Activated CD4-positive, alpha-beta T cell treated with anti-CD3 and anti-CD28 coated beads for 36 hours (primary cell): ENCODE measurements at regions of chr2 and their contacts with region 1.

Region 1: DNA sequence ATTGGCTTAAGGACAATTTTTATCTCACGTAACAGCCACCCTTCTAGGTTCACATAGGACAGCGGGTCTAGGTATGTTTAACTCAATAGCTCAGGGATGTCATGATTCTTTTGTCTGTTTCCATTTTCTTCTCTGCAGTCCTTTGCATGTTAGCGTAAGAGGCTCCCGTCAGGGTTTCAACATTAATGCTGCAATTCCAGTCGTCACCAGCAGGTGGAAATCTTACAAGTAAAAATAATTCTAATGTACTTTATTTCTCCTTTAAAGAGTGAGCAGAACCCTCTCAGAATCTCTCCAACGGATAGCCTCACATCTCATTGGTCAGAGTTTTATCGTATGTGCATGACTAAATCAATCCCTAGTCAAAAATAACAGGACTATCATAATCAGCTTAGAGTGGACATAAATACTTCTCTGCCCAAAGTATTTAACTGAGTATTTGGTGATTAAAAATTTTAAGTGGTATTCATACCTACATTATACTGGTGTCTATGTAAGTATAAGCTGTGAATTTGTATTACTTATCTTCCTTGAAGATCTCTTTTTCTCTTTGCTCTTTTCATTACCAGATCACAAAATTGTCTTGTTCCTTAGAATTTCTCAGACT is 487.2 kb upstream of the GCFC2 start:
- DNase-seq: peak; percentile 68
- ATAC-seq: no peak
- H3K4me3 Mint-ChIP-seq: no peak overlapping the region
- H3K27ac Mint-ChIP-seq: no peak overlapping the region
- H3K4me1 Mint-ChIP-seq: no peaks in the 10 kb centered on the region
- H3K27me3 Mint-ChIP-seq: no peaks in the 10 kb centered on the region

Region 2: GRCh38 chr2:75787532-75788132 is 410.3 kb before region 1 on chr2:
- CTCF ChIA-PET with region 1: no interaction called
- POLR2A ChIA-PET with region 1: no interaction called
- intact Hi-C with region 1: loop called in 1 of 2 experiments (anchors 10 kb)
- DNase-seq: no peak
- ATAC-seq: no peak
- H3K4me3 Mint-ChIP-seq: no peak overlapping the region
- H3K27ac Mint-ChIP-seq: no peak overlapping the region
- H3K4me1 Mint-ChIP-seq: no peaks in the 10 kb centered on the region
- H3K27me3 Mint-ChIP-seq: peaks cover 4% of the 10 kb centered on the region

Region 3: GRCh38 chr2:76599732-76600368 is 401.9 kb after region 1 on chr2:
- CTCF ChIA-PET with region 1: interaction called, 3 read pairs
- POLR2A ChIA-PET with region 1: no interaction called
- intact Hi-C with region 1: loop called (anchors 1 to 2 kb)
- DNase-seq: peak; percentile 20
- ATAC-seq: peak; percentile 42
- H3K4me3 Mint-ChIP-seq: no peak overlapping the region
- H3K27ac Mint-ChIP-seq: no peak overlapping the region
- H3K4me1 Mint-ChIP-seq: no peaks in the 10 kb centered on the region
- H3K27me3 Mint-ChIP-seq: no peaks in the 10 kb centered on the region